HAP-1 (cell line): ENCODE measurements at regions of chr3 and their contacts with region 1.

Region 1: GRCh38 chr3:140128631-140129030 is 193.6 kb downstream of the CLSTN2 start:
- DNase-seq: peak; percentile 25 to 77
- H3K4me3 ChIP-seq: no peak overlapping the region
- H3K4me1 ChIP-seq: no peaks in the 10 kb centered on the region
- H3K27me3 ChIP-seq: peaks cover 3% of the 10 kb centered on the region; the same call in 1 of the 2 replicates

Region 2: DNA sequence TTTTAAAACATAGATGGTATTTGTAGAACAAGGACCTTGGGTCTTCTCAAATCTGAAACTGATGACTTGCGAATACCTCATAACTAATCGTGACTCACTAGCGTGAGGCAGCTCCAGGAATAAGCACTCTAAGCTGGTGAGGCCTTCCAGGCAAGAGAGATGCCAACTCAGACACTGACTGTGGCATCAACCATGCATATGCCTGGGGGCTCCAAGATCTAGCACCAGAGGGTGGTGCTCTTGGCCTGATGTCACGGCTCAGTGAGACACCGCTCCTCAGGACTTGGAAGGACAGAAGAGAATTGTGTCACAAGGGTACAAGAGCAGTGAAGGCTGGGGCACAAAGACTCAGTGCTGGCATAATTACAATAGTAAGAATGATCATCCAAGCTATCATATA is 424.3 kb after region 1 on chr3:
- in situ Hi-C with region 1: no loop called
- DNase-seq: no peak
- H3K4me3 ChIP-seq: no peak overlapping the region
- H3K4me1 ChIP-seq: no peaks in the 10 kb centered on the region
- H3K27me3 ChIP-seq: no peaks in the 10 kb centered on the region

Region 3: GRCh38 chr3:140736863-140737460 is 608.3 kb after region 1 on chr3:
- in situ Hi-C with region 1: loop called (anchors 25 kb)
- DNase-seq: peak; percentile 46 to 68
- H3K4me3 ChIP-seq: no peak overlapping the region
- H3K4me1 ChIP-seq: no peaks in the 10 kb centered on the region
- H3K27me3 ChIP-seq: no peaks in the 10 kb centered on the region

Region 4: DNA sequence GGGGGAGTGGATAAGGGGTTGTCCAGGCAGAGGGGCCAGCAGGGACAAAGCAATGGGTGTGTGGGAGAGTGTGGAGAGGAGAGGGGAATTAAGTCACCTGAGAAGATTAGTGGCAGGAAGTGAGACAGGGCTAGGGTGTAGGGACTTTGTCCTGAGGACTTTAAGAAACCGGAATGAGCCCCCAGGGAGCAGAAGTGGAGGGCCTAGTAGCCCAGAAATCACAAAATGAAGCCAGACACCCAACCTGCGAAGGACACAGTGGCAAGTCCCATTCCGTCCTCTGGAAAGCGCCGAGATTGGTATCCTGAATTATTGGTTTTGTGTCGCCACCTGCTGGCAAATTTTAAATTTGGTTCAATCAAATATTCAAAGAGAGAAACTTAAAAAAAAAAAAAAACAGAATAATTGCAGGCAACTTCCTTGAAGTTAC is 735.0 kb after region 1 on chr3:
- in situ Hi-C with region 1: loop called (anchors 25 kb)
- DNase-seq: peak; percentile 37 to 76
- H3K4me3 ChIP-seq: no peak overlapping the region
- H3K4me1 ChIP-seq: no peaks in the 10 kb centered on the region
- H3K27me3 ChIP-seq: no peaks in the 10 kb centered on the region